ENCODE measurements at regions of chr2 and their contacts with region 1.

Region 1: DNA sequence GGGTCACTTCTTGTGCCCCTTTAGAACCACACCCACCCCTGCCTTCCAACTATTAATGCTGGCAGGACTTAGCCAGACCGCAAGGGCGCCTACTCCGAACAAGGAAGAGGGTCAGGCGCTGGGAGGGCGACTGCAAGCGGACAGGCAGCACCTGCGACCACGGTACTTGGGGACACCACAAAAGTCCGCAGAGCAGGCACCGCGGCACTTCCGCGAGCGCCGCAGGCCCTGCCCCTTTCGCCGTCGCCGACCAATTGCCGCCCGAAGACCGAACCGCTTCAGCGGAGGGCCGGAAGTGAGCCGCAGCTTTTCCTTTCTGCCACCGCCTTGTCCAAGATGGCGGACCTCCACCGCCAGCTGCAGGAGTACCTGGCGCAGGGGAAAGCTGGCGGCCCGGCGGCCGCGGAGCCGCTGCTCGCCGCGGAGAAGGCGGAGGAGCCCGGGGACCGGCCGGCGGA is at the start of gene SFT2D3:
- DNase-seq: peak; percentile 89 to 92 (median 91)
- H3K4me3 ChIP-seq: peak within 1 kb of the TSS; percentile 74 to 93
- H3K4me3 Mint-ChIP-seq: peak within 1 kb of the TSS; percentile 91 to 95 (median 92)
- H3K27ac ChIP-seq: peak within 1 kb of the TSS; percentile 90
- H3K27ac Mint-ChIP-seq: peak within 1 kb of the TSS; percentile 97 to 99 (median 98)
- H3K4me1 ChIP-seq: peaks cover 42% of the 10 kb centered on the region
- H3K4me1 Mint-ChIP-seq: peaks cover 25 to 53% (median 34%) of the 10 kb centered on the region in 4 donors
- H3K27me3 ChIP-seq: no peaks in the 10 kb centered on the region
- H3K27me3 Mint-ChIP-seq: no peaks in the 10 kb centered on the region
- total RNA-seq, gene SFT2D3: 14.4 to 15.4 TPM

Region 2: DNA sequence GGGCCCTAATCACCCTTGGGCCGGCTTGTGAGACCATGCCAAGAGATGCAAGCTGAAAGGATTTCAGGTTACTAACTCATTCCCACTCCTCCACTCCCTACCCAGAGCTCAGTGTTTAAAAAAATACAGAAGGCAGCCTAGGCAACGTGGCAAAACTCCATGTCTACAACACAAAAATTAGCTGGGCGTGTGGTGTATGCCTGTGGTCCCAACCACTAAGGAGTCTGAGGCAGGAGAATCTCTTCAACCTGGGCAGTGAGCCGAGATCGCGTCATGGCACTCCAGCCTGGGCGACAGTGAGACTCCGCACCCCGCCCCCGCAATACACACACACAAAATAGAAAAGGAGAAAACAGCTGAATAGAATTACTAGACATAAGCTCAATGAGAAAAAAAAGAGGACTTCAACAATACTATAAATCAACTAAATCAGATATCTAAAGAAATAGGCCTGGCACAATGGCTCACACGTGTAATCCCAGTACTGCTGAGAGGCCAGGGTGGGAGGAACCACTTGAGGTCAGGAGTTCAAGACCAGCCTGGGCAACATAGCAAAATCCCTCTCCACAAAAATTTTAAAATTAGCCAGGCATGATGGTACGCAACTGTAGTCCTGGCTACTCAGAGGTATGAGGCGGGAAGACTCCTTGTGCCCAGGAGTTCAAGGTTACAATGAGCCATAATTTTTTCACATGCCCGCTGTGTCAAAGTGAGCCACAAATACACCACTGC is 185.0 kb before region 1 on chr2:
- CTCF ChIA-PET with region 1: no interaction called
- POLR2A ChIA-PET with region 1: no interaction called
- intact Hi-C with region 1: no loop called
- DNase-seq: no peak
- H3K4me3 ChIP-seq: no peak overlapping the region
- H3K4me3 Mint-ChIP-seq: peak overlapping the region in 1 of 8 donors; percentile 29
- H3K27ac ChIP-seq: no peak overlapping the region
- H3K27ac Mint-ChIP-seq: peak overlapping the region in 3 of 7 donors; percentile 8 to 82 (median 62)
- H3K4me1 ChIP-seq: peaks cover 61% of the 10 kb centered on the region
- H3K4me1 Mint-ChIP-seq: peaks cover 50 to 82% (median 71%) of the 10 kb centered on the region in 4 donors
- H3K27me3 ChIP-seq: no peaks in the 10 kb centered on the region
- H3K27me3 Mint-ChIP-seq: no peaks in the 10 kb centered on the region

Region 3: DNA sequence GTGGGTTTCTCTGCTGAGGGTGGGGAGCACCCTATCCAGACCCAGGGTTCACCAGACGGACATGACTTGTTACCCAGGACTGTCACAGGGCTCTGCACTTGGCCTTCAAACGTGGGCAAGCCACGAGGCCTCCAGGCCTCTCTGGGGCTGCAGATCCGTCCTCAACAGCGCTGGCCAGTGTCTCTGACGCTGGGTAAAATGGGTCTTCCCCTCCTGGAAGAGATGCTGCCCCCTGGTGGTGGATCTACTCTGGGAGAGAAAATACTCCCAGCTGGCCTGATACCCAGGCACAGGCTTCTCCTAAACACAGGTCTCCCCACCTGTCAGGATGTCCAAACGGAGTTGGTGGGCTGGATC is 51.6 kb before region 1 on chr2:
- CTCF ChIA-PET with region 1: interaction called, 3 read pairs
- POLR2A ChIA-PET with region 1: interaction called, 8 read pairs
- intact Hi-C with region 1: loop called (anchors 1 kb)
- DNase-seq: peak; percentile 72 to 78 (median 73)
- H3K4me3 ChIP-seq: no peak overlapping the region
- H3K4me3 Mint-ChIP-seq: peak overlapping the region in 6 of 8 donors; percentile 38 to 70 (median 65)
- H3K27ac ChIP-seq: no peak overlapping the region
- H3K27ac Mint-ChIP-seq: peak overlapping the region in 3 of 7 donors; percentile 49 to 73 (median 52)
- H3K4me1 ChIP-seq: peaks cover 9% of the 10 kb centered on the region
- H3K4me1 Mint-ChIP-seq: peaks cover 12 to 21% (median 16%) of the 10 kb centered on the region in 4 donors
- H3K27me3 ChIP-seq: no peaks in the 10 kb centered on the region
- H3K27me3 Mint-ChIP-seq: no peaks in the 10 kb centered on the region

Region 4: DNA sequence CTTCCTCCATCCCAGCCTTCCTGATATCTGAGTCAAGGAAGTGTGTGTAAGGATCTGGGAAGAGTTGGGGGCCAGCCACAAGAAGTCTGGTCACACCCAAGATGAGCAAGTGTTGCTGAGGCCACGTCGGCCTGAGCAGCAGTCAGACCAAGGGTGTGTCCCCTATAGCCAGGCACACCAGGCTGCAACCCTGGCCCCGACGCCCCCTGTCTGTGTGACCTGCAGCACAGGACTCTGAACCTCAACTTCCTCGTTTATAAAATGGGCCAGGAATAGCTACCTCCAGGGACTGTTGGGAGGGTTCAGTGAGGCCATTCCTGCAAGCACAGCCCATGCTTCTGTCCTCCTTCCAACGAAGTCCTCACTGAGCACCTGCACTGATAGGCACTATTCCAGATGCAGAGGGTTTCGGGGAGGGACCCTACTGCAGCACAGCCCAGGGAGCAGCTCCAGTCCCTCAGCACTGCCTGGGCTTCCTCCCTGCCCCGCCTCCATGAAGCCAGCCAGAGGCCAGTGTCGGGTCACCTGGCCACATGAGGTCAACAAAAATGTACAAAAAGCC is 39.2 kb before region 1 on chr2:
- CTCF ChIA-PET with region 1: no interaction called
- POLR2A ChIA-PET with region 1: no interaction called
- intact Hi-C with region 1: no loop called
- DNase-seq: no peak
- H3K4me3 ChIP-seq: no peak overlapping the region
- H3K4me3 Mint-ChIP-seq: no peak overlapping the region
- H3K27ac ChIP-seq: no peak overlapping the region
- H3K27ac Mint-ChIP-seq: no peak overlapping the region
- H3K4me1 ChIP-seq: no peaks in the 10 kb centered on the region
- H3K4me1 Mint-ChIP-seq: no peaks in the 10 kb centered on the region
- H3K27me3 ChIP-seq: peaks cover 19% of the 10 kb centered on the region
- H3K27me3 Mint-ChIP-seq: peaks cover 24 to 43% of the 10 kb centered on the region in 2 donors

Region 5: DNA sequence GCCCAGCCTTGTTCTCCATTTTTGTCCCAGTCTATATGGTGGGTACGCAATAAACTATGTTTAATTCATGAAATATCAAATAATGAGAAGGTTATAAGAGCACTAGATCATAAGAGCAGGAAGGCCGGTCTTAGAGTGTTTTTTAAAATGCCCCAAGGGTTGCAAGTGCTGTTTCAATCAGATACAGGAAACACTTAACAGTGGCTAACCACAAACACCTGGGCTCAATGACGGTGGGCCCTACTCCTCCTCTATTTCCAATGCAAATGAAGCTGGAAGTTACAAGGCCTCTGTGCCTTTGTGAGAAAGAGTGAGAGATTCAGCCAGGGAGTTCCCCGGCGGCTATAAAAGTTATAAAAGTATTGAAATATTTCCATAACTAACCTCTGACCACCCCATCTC is 128.6 kb after region 1 on chr2:
- CTCF ChIA-PET with region 1: no interaction called
- POLR2A ChIA-PET with region 1: interaction called, 11 read pairs
- intact Hi-C with region 1: no loop called
- DNase-seq: peak; percentile 73 to 90 (median 78)
- H3K4me3 ChIP-seq: no peak overlapping the region
- H3K4me3 Mint-ChIP-seq: peak overlapping the region in 7 of 8 donors; percentile 6 to 75 (median 53)
- H3K27ac ChIP-seq: peak overlapping the region; percentile 35
- H3K27ac Mint-ChIP-seq: peak overlapping the region; percentile 82 to 95 (median 91)
- H3K4me1 ChIP-seq: peaks cover 24% of the 10 kb centered on the region
- H3K4me1 Mint-ChIP-seq: peaks cover 19 to 40% (median 26%) of the 10 kb centered on the region in 4 donors
- H3K27me3 ChIP-seq: no peaks in the 10 kb centered on the region
- H3K27me3 Mint-ChIP-seq: no peaks in the 10 kb centered on the region

Region 6: GRCh38 chr2:128027801-128028667 is 326.8 kb after region 1 on chr2 and contains the start of gene SAP130:
- CTCF ChIA-PET with region 1: no interaction called
- POLR2A ChIA-PET with region 1: interaction called, 5 read pairs
- intact Hi-C with region 1: loop called (anchors 1 kb)
- DNase-seq: peak; percentile 97 to 99 (median 98)
- H3K4me3 ChIP-seq: peak within 1 kb of the TSS; percentile 36 to 82
- H3K4me3 Mint-ChIP-seq: peak within 1 kb of the TSS; percentile 94 to 99 (median 98)
- H3K27ac ChIP-seq: peak within 1 kb of the TSS; percentile 73
- H3K27ac Mint-ChIP-seq: peak within 1 kb of the TSS; percentile 93 to 98 (median 97)
- H3K4me1 ChIP-seq: peaks cover 23% of the 10 kb centered on the region
- H3K4me1 Mint-ChIP-seq: peaks cover 15 to 24% (median 20%) of the 10 kb centered on the region in 4 donors
- H3K27me3 ChIP-seq: no peaks in the 10 kb centered on the region
- H3K27me3 Mint-ChIP-seq: no peaks in the 10 kb centered on the region
- total RNA-seq, gene SAP130: 25.5 to 30.2 TPM

Region 7: GRCh38 chr2:128585706-128586105 is 884.5 kb after region 1 on chr2:
- CTCF ChIA-PET with region 1: no interaction called
- POLR2A ChIA-PET with region 1: no interaction called
- intact Hi-C with region 1: no loop called
- DNase-seq: no peak
- H3K4me3 ChIP-seq: no peak overlapping the region
- H3K4me3 Mint-ChIP-seq: no peak overlapping the region
- H3K27ac ChIP-seq: no peak overlapping the region
- H3K27ac Mint-ChIP-seq: no peak overlapping the region
- H3K4me1 ChIP-seq: no peaks in the 10 kb centered on the region
- H3K4me1 Mint-ChIP-seq: peaks cover 0 to 2% (median 0%) of the 10 kb centered on the region in 4 donors
- H3K27me3 ChIP-seq: no peaks in the 10 kb centered on the region
- H3K27me3 Mint-ChIP-seq: peaks cover 3 to 4% of the 10 kb centered on the region in 2 donors

Measured in CD4-positive, alpha-beta memory T cell (primary cell).